CD14-positive monocyte (primary cell): ENCODE measurements at regions of chr14 and their contacts with region 1.

Region 1: DNA sequence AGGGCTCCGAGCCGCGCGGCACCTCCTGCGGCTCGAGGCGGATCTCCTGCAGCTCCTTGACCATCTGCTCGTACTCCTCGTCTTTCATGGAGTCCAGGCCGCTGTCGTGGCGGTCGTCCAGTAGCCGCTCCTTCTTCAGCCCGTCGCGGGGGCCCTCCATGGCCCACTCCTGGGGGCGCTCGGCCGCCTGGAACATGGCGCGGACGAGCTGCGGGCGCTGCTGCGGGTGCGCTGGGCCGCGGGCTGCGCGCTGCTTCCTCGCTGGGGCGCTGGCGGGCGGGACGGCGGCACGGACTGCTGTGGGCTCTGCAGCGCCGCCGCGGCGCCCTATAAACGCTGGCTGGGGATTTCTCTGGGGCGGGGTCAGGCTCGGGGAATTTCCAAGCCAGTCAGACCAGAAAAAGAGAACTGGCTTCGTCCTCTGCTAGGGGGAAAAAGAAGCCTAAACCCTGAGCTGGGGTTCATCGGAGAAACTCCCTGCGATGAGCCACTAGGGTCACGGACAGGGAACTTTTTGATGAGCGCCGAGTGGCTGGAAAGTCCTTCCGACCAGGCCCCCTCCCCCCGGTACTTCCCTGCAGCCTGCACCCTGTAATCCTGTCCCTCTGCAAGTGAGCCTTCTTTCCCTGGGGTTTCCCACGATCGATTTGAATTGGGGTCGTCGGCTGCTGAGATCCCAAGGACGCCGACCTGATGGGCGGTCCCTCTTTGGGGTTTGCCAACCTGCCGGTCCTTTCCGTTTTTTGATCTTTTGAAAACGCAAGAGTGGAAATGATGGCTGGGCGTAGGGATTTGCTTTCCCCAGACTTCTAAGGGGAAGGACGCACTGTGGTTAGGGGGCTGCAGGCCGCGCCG is at the start of gene NFKBIA:
- DNase-seq: peak; percentile 97 to 99 (median 98)
- H3K4me3 ChIP-seq: peak within 1 kb of the TSS; percentile 84 to 99 (median 88)
- H3K4me3 Mint-ChIP-seq: peak within 1 kb of the TSS; percentile 95 to 99
- H3K27ac ChIP-seq: peak within 1 kb of the TSS; percentile 99
- H3K27ac Mint-ChIP-seq: peak within 1 kb of the TSS; percentile 98 to 100 (median 99)
- H3K4me1 ChIP-seq: peaks cover 52 to 56% of the 10 kb centered on the region in 2 donors
- H3K4me1 Mint-ChIP-seq: peaks cover 54% of the 10 kb centered on the region
- H3K27me3 ChIP-seq: no peaks in the 10 kb centered on the region
- H3K27me3 Mint-ChIP-seq: peaks cover 1 to 9% (median 6%) of the 10 kb centered on the region in 3 donors
- CTCF ChIP-seq: no peak
- polyA plus RNA-seq, gene NFKBIA: 868 to 4,739 (median 935) TPM

Region 2: DNA sequence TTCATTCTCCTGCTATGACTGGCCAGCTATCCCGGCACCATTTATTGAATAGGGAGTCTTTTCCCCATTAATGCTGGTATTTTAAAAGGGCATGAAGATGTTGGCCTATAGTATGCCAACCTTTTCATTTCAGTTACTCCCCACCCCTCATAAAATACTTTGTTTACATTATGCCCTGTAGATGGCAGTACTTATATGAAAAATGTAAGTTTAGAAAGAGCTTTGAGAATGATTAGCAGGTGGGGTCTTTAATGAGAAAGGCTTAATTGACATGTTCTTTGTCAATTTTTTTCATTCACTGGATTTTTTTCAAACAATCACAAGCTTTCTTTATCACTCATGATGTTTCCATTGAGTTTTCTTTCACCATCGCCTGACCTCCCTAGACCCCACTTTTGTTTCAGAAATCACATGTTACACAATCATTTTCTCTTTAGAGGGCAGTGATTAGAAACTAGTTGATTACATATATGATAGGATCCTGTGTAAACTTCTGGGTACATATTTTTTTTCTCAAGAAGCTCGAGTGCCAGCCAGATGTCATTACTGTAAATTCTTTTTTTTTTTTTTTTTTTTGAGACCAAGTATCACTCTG is 175.1 kb before region 1 on chr14:
- intact Hi-C with region 1: loop called in 1 of 2 experiments (anchors 5 kb)
- DNase-seq: peak in 1 of 3 donors; percentile 11
- H3K4me3 ChIP-seq: no peak overlapping the region
- H3K4me3 Mint-ChIP-seq: no peak overlapping the region
- H3K27ac ChIP-seq: no peak overlapping the region
- H3K27ac Mint-ChIP-seq: peak overlapping the region in 2 of 7 donors; percentile 74 to 79
- H3K4me1 ChIP-seq: peaks cover 30 to 44% of the 10 kb centered on the region in 2 donors
- H3K4me1 Mint-ChIP-seq: peaks cover 41% of the 10 kb centered on the region
- H3K27me3 ChIP-seq: no peaks in the 10 kb centered on the region
- H3K27me3 Mint-ChIP-seq: peaks cover 0 to 3% (median 0%) of the 10 kb centered on the region in 3 donors
- CTCF ChIP-seq: peak; percentile 56

Region 3: DNA sequence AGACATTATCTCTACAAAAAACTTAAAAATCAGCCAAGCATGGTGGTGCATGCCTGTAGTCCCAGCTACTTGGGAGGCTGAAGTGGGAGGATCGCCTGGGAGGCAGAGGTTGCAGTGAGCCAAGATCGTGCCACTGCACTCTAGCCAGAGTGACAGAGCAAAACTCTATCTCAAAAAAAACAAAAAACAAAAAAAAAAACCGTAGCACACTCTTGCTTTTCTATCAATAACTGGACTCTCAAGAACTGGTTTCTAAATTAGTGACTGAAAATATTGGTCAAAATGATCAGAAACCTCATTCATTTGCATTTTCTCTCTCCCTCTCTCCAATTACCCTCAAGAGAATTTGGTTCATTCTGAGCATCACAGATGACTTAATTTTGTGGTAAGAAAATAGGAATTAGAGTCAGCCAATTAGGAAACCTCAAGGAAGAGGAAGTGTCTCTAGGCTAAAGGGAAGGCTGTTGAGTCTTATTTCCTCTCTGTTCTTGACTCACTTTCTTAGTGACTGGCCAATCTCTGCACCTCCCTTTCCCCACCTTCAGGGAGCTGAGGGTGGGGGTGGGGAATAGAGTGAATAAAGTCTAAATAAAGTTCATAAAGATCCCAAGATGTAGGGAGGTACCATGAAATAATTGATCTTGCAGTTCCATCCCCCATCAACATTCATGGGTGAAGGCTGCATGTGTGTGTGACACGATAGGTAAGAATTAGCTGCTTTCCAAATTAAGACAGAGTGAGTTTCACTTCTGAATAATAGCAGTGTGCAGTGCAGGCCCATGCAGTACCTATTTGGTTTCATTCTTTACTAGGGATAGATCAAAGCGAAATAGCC is 119.3 kb before region 1 on chr14:
- intact Hi-C with region 1: loop called (anchors 2 kb)
- DNase-seq: peak; percentile 86 to 96 (median 94)
- H3K4me3 ChIP-seq: peak overlapping the region; percentile 2 to 72 (median 48)
- H3K4me3 Mint-ChIP-seq: peak overlapping the region; percentile 71 to 85
- H3K27ac ChIP-seq: peak overlapping the region; percentile 55 to 96
- H3K27ac Mint-ChIP-seq: peak overlapping the region; percentile 93 to 99 (median 97)
- H3K4me1 ChIP-seq: peaks cover 45 to 49% of the 10 kb centered on the region in 2 donors
- H3K4me1 Mint-ChIP-seq: peaks cover 50% of the 10 kb centered on the region
- H3K27me3 ChIP-seq: no peaks in the 10 kb centered on the region
- H3K27me3 Mint-ChIP-seq: peaks cover 0 to 4% (median 0%) of the 10 kb centered on the region in 3 donors
- CTCF ChIP-seq: no peak

Region 4: GRCh38 chr14:35331605-35332516 is 72.8 kb before region 1 on chr14:
- intact Hi-C with region 1: loop called in 1 of 2 experiments (anchors 5 kb)
- DNase-seq: peak; percentile 62 to 93 (median 70)
- H3K4me3 ChIP-seq: peak overlapping the region in 1 of 3 experiments; percentile 48
- H3K4me3 Mint-ChIP-seq: peak overlapping the region; percentile 57 to 74
- H3K27ac ChIP-seq: peak overlapping the region; percentile 39 to 61
- H3K27ac Mint-ChIP-seq: peak overlapping the region; percentile 86 to 94 (median 91)
- H3K4me1 ChIP-seq: peaks cover 48% of the 10 kb centered on the region in 2 donors
- H3K4me1 Mint-ChIP-seq: peaks cover 48% of the 10 kb centered on the region
- H3K27me3 ChIP-seq: no peaks in the 10 kb centered on the region
- H3K27me3 Mint-ChIP-seq: peaks cover 0 to 3% (median 0%) of the 10 kb centered on the region in 3 donors
- CTCF ChIP-seq: no peak

Region 5: GRCh38 chr14:35341446-35342159 is 63.1 kb before region 1 on chr14:
- intact Hi-C with region 1: loop called in 1 of 2 experiments (anchors 10 kb)
- DNase-seq: peak; percentile 52 to 74 (median 60)
- H3K4me3 ChIP-seq: peak overlapping the region in 1 of 3 experiments; percentile 46
- H3K4me3 Mint-ChIP-seq: peak overlapping the region; percentile 43 to 79
- H3K27ac ChIP-seq: peak overlapping the region; percentile 69 to 78
- H3K27ac Mint-ChIP-seq: peak overlapping the region; percentile 83 to 93 (median 90)
- H3K4me1 ChIP-seq: peaks cover 71 to 78% of the 10 kb centered on the region in 2 donors
- H3K4me1 Mint-ChIP-seq: peaks cover 72% of the 10 kb centered on the region
- H3K27me3 ChIP-seq: no peaks in the 10 kb centered on the region
- H3K27me3 Mint-ChIP-seq: peaks cover 0 to 2% (median 1%) of the 10 kb centered on the region in 3 donors
- CTCF ChIP-seq: no peak

Region 6: DNA sequence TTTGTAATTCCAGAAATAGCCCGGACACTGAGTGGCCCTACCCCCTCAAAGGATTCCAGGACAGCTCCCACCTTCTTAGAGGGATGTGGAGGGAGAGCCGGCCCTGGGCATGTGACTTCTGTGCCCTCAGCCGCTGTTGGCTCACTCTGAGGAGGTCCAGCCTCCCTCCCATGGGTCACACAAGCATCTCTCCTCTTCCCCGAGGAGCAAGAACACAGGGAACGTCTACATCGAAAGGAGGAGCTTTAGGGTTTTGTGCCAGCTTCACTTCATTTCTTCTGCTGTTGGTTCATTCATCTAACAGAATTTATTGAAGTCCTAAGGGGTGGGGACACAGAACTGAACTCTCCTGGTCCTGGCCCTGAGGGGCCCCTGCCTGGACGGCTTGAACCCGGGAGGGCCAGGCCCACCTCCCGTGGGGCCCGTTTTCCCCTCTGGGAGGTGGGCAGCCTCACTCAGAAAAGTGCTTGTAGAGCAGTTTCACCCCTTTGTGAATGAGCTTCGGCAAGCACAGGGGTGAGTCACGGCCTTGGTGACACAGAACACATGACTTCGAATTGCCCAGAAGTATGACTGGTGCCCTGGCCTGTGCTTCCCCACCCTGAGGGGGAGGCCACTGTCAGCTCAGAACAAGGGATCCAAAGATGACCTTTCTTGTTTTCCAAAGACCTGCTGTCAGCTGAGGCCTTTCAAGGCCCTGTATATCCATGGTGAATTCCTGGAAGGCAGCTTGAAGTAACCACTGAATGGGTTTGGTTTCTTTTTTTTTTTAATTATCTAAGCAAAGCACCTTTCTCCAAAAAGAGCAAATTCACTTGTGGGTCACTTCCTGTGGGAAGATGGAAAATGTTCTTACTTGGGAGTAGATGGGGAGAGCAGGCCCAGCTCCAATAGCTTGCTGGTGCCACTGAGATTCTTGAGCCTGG is 39.3 kb before region 1 on chr14:
- intact Hi-C with region 1: loop called (anchors 1 to 2 kb)
- DNase-seq: peak; percentile 97 to 99 (median 97)
- H3K4me3 ChIP-seq: peak overlapping the region in 1 of 3 experiments; percentile 4
- H3K4me3 Mint-ChIP-seq: peak overlapping the region; percentile 48 to 61
- H3K27ac ChIP-seq: peak overlapping the region; percentile 96 to 98
- H3K27ac Mint-ChIP-seq: peak overlapping the region; percentile 98 to 100 (median 99)
- H3K4me1 ChIP-seq: peaks cover 43 to 44% of the 10 kb centered on the region in 2 donors
- H3K4me1 Mint-ChIP-seq: peaks cover 47% of the 10 kb centered on the region
- H3K27me3 ChIP-seq: no peaks in the 10 kb centered on the region
- H3K27me3 Mint-ChIP-seq: peaks cover 0 to 3% (median 0%) of the 10 kb centered on the region in 3 donors
- CTCF ChIP-seq: no peak